Right ventricle myocardium inferior (tissue), 1 donor: ENCODE measurements at regions of chr10 and their contacts with region 1.

Region 1: GRCh38 chr10:28879875-28880682 is 202.8 kb downstream of the BAMBI start:
- DNase-seq: no peak
- ATAC-seq: peak; percentile 73

Region 2: GRCh38 chr10:28684986-28685589 is 195.0 kb before region 1 on chr10:
- intact Hi-C with region 1: loop called (anchors 2 kb)
- DNase-seq: no peak
- ATAC-seq: no peak

Region 3: DNA sequence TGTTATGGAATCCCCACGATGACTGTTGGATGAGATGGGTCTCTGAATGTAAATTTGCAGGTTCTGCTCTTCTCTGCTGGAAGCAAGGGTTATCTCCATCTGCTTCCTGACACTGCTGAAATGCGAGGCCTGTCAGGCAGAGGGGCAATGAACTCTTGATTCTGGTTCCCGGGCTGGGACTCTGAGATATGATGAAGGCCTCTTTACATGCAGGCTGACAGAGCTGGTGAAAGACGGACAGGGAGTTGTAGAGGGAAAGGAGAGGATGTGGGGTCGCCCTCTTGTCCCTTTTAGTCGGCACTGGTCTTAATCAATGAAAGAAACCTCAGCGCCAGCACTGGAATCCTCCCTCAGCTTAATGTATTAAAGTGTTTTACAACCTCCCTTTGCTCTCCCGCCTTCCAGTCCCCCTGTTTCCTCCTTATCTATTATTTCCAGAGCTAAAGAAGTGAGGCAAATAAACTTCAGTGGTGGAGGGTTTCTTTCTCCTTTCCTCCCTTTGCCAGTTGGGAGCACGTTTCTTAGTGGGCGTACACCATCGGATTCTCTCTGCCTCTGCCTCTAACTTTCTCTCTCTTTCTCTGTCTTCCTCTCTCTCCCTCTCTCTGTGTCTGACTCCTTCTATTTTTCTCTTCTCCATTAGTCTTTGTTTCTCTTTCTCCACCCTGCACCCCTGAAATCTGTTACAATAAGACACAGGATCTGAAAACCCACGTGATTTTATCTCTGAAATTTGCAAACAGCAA is 57.2 kb before region 1 on chr10:
- intact Hi-C with region 1: no loop called
- DNase-seq: no peak
- ATAC-seq: no peak

Region 4: GRCh38 chr10:28913436-28914237 is 33.6 kb after region 1 on chr10:
- intact Hi-C with region 1: no loop called
- DNase-seq: no peak
- ATAC-seq: no peak

Region 5: GRCh38 chr10:29229258-29229705 is 349.2 kb after region 1 on chr10:
- intact Hi-C with region 1: no loop called
- DNase-seq: no peak
- ATAC-seq: no peak